ENCODE measurements at regions of chr1 and their contacts with region 1.

Region 1: DNA sequence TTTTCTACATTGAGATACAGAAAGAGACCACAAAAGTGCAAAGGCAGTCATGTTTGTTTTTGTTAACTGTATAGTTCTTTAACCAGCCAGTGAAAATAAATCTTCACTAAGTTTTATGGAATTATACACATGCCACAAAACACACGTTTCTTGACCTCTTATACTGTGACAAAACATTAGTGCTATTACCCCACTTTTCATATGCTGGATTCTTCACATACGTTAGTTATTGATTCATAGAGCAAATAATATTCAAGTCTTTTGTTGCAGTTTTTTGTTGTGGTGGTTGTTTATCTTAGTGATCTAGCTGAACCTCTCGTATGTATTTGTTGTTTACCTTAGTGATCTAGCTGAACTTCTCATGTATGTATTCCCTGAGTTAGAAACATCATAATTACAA is 28.0 kb downstream of the LYPLAL1 start:
- DNase-seq: no peak
- ATAC-seq: no peak
- H3K4me3 Mint-ChIP-seq: no peak overlapping the region
- H3K27ac Mint-ChIP-seq: no peak overlapping the region
- H3K4me1 Mint-ChIP-seq: no peaks in the 10 kb centered on the region
- H3K27me3 Mint-ChIP-seq: no peaks in the 10 kb centered on the region

Region 2: GRCh38 chr1:219566951-219567947 is 365.6 kb after region 1 on chr1:
- CTCF ChIA-PET with region 1: no interaction called
- POLR2A ChIA-PET with region 1: no interaction called
- intact Hi-C with region 1: loop called in 1 of 2 experiments (anchors 5 kb)
- DNase-seq: no peak
- ATAC-seq: no peak
- H3K4me3 Mint-ChIP-seq: no peak overlapping the region
- H3K27ac Mint-ChIP-seq: no peak overlapping the region
- H3K4me1 Mint-ChIP-seq: no peaks in the 10 kb centered on the region
- H3K27me3 Mint-ChIP-seq: peaks cover 3% of the 10 kb centered on the region

Measured in activated CD4-positive, alpha-beta T cell treated with anti-CD3 and anti-CD28 coated beads for 36 hours (primary cell).